ENCODE measurements at regions of chr19 and their contacts with region 1.

Region 1: DNA sequence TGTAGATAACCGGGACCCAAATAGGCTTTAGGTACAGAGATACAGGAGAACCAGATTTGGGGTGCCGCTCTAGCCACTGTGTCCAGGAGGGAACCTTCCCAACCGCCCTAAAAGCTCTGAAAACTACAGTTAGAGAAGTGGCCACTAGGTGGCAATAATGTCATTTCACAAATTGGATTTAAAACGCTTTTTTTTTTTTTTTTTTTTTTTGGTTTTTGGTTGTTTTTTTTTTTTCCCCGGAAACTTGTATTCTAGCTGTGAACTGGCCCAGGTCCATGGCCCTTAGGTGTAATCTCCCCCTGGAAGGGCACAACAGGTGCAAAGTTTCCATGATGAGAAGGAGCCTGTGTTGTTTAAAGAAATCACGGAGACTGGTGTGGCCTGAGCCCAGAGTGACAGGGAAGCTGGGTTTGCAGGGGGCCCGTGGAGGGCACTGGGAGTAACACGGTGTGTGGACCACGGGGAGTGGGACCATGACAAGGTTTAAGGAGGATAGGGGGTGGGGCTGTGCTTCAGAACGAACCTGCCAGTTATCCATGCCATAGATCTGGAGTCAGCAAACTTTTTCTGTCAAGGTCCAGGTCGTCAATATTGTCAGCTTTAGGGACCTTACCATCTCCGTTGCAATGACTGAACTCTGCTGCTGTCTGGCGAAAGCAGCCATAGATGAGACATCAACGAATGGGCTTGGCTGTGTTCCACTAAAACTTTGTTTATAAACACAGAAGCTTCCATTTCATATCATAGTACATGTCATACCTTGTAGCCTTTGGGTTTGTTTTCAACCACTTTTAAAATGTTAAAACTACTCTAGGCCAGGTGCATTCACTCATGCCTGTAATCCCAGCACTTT is 10.1 kb downstream of the OR1I1 start:
- DNase-seq: peak in 5 of 6 donors; percentile 65 to 83 (median 76)
- ATAC-seq: peak; percentile 91 to 97 (median 94)
- H3K4me3 ChIP-seq: no peak overlapping the region
- H3K27ac ChIP-seq: peak overlapping the region in 2 of 4 donors; percentile 38 to 77
- H3K4me1 ChIP-seq: peaks cover 0 to 2% (median 0%) of the 10 kb centered on the region in 3 donors
- H3K27me3 ChIP-seq: no peaks in the 10 kb centered on the region
- CTCF ChIP-seq: peak; percentile 35 to 79 (median 67)

Region 2: GRCh38 chr19:15154002-15154612 is 62.0 kb after region 1 on chr19:
- intact Hi-C with region 1: loop called (anchors 5 to 10 kb)
- DNase-seq: no peak
- ATAC-seq: peak in 1 of 4 donors; percentile 42
- H3K4me3 ChIP-seq: no peak overlapping the region
- H3K27ac ChIP-seq: no peak overlapping the region
- H3K4me1 ChIP-seq: no peaks in the 10 kb centered on the region
- H3K27me3 ChIP-seq: no peaks in the 10 kb centered on the region
- CTCF ChIP-seq: peak in 1 of 4 donors; percentile 13

Region 3: GRCh38 chr19:15159251-15159650 is 67.1 kb after region 1 on chr19:
- intact Hi-C with region 1: loop called in 2 of 3 experiments (anchors 5 to 10 kb)
- DNase-seq: no peak
- ATAC-seq: no peak
- H3K4me3 ChIP-seq: no peak overlapping the region
- H3K27ac ChIP-seq: no peak overlapping the region
- H3K4me1 ChIP-seq: no peaks in the 10 kb centered on the region
- H3K27me3 ChIP-seq: no peaks in the 10 kb centered on the region
- CTCF ChIP-seq: no peak

Measured in pancreas (tissue), 10 donors.